ENCODE measurements at regions of chr12 and their contacts with region 1.

Region 1: DNA sequence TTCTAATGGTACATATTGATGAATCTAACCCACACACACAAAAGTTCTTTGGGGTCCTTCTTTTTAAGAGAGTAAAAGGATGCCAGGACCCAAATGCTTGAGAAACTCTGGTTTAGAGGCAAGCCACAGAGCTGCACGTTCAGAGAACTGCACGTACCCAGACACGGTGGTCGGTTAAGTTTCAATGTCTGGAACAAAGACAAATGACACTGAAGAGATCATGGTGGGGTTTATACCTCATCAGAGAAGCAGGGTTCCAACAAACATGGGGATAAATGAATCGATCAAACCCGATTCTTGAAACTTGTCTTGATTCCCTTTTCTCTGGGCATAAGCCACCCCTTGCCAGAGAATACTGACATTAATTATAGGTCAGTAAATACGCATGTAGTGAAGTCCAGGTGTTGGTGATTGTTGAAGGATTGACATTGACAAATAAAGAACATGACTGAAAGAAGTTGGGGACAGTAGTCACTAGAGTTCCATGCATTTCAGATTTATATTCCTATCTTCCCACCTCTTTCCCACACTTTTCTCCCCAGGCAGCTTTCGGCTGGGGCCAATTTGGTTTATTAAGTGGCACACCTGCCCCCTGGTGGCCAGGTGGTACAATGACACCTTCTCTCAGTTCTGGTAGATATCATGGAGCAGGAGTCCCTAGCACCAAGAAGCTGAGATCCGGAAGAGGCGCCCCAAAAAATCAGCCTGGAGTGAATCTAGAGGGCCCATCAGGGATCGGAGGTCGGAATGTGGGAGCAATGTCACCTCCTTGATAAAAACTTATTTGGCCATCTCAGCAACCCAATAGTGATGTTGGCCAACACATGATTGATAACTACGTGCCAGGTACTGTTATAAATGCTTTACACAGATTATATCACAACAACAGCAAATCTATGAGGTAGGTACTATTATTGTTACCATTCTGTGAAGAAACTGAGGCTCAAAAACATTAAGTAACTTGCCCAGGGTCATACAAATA is 17.8 kb upstream of the HDAC7 start:
- DNase-seq: no peak
- H3K4me3 ChIP-seq: no peak overlapping the region
- H3K27me3 ChIP-seq: no peaks in the 10 kb centered on the region
- CTCF ChIP-seq: peak; percentile 81

Region 2: GRCh38 chr12:47725893-47726292 is 111.6 kb before region 1 on chr12:
- CTCF ChIA-PET with region 1: interaction called, 64 read pairs
- POLR2A ChIA-PET with region 1: no interaction called
- DNase-seq: no peak
- H3K4me3 ChIP-seq: no peak overlapping the region
- H3K27me3 ChIP-seq: no peaks in the 10 kb centered on the region
- CTCF ChIP-seq: no peak

Region 3: DNA sequence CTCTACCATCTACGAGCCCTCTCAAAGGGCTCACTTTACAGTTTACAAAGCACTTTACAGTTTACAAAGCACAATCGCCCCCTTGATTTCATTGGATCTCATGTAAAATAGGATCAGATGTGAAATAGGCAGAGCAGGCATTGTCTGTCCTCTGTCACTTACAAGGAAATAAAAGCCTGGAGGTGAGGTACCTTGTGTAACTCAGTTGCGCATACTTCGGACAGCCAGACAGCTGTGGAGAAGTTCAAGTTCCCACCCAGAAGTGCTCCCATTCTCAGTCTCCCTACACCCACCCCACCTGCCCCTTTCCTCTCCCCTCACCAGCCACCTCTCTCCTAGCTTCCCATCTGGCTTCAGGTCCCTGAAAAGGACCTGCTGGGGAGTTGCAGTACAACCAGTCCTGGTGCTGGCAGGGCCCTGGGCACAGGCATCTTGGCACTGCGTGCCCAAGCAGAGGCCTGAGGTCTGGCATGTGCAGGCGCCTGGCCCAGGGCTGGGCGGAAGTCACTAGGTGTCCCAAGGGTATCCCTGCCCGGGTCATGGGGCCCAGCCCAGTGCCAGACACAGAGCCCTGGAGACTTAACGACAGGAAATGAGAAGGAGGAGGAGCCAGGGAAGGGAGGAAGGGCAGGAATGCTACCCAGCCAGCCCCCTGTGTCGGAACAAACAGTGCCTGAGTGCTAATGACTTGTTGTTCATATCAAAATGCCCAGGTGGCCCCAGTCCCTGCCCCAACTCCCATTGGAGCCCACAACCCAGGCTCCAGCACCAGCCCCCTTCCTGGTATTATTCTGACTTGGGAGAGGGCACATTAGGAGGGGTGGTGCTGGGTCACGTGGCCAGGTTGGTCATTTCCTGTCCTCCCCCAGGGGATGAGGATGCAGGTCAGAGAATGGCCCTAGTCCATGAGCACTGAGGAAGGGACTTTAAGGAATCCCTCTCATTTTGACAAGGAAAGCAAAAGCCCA is 84.2 kb before region 1 on chr12:
- CTCF ChIA-PET with region 1: interaction called, 18 read pairs
- POLR2A ChIA-PET with region 1: no interaction called
- DNase-seq: no peak
- H3K4me3 ChIP-seq: no peak overlapping the region
- H3K27me3 ChIP-seq: no peaks in the 10 kb centered on the region
- CTCF ChIP-seq: no peak

Region 4: DNA sequence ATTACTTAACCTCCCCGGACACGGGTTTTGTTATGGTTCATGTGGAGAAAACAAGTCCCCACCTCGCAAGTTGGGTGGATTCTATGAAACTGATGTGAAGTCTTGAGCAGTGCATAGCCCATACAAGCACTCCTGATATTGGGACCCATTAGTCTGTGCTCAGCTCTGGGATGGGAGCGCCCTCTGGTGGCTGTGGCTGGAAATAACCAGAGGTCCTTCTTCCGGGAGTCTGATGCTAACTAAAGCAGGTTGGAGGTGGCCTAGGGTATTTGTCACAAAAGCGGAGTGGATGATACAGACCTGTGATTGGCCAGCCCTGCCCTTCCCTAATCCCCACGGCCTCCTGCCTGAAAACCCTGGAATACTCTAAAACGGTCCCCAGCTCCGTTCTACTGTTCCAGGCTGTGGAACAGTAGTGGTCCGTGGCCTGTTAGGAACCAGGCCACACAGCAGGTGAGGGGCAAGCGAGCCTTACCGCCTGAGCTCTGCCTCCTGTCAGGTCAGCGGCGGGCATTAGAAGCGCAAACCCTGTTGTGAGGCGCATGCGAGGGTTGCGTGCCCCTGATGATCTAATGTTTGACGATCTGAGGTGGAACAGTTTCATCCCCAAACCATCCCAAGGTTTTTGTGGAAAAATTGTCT is 58.1 kb before region 1 on chr12:
- CTCF ChIA-PET with region 1: interaction called, 163 read pairs
- POLR2A ChIA-PET with region 1: no interaction called
- DNase-seq: peak; percentile 23
- H3K4me3 ChIP-seq: no peak overlapping the region
- H3K27me3 ChIP-seq: no peaks in the 10 kb centered on the region
- CTCF ChIP-seq: peak; percentile 94

Region 5: DNA sequence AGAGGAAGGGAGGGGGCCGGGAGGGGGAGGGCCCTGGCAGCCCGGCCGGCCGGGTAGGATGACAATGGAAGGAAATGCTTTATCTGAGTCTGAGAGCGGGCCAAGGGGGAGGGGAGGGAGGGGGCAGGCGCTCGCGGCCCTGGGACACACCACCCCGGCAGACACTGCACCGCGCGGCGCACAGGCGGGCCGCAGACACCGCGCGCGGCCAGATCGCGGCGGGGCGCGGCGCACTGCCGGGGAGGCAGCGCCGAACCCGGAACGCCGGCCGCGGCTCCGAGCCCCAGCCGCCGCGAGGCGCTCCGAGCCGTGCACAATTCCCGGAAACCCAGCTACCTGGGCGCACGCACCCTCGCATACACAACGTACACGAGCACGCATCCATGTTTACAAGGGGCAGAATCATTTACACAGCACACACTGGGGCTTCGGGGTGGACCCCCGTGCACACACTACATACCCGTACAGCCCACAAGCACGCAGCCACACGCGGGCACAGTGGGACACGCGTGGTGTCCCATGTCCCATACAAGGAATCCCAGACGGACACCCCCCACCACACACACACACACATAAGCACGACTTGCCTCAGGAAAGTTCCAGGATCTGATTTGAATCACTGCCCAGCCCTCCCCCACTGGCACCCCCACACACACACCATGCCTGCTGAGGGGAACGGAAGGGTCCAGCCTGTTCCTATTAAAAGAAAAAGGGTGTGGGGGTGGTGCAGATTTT is 17.4 kb before region 1 on chr12 and contains the start of gene HDAC7:
- CTCF ChIA-PET with region 1: interaction called, 41 read pairs
- POLR2A ChIA-PET with region 1: no interaction called
- DNase-seq: no peak
- H3K4me3 ChIP-seq: peak within 1 kb of the TSS; percentile 68
- H3K27me3 ChIP-seq: no peaks in the 10 kb centered on the region
- CTCF ChIP-seq: no peak
- polyA plus RNA-seq, gene HDAC7: 28.2 and 67.0 TPM in 2 replicates